ENCODE measurements at regions of chr6 and their contacts with region 1.

Region 1: GRCh38 chr6:138752017-138752416 is 21.6 kb upstream of the CCDC28A start:
- DNase-seq: no peak
- H3K4me3 ChIP-seq: no peak overlapping the region
- H3K27ac ChIP-seq: no peak overlapping the region
- H3K4me1 ChIP-seq: no peaks in the 10 kb centered on the region
- H3K27me3 ChIP-seq: no peaks in the 10 kb centered on the region
- CTCF ChIP-seq: no peak

Region 2: DNA sequence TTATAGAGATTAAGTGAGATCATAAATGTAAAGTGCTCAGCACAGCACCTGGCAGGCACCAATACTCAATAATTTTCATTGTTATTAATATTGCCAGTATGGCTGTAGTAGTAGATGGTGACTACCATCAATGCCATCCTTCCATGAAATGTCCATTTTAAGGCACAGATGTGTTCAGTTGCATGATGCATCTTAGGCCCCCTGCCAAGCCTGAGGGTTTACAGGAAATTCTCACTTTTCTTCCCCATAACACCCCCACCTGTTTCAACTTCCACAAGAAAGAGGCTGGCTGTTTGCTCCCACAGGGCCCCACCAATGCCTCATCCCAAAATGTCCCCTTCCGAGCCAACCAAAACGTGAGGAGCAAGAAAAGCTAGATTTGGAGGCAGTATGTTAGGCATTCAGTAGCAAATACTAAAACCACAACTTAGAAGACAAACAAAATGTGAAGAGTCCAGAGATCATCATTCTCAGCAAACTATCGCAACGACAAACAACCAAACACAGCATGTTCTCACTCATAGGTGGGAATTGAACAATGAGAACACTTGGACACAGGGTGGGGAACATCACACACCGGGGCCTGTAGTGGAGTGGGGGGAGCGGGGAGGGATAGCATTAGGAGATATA is 142.1 kb before region 1 on chr6:
- intact Hi-C with region 1: loop called (anchors 10 kb)
- DNase-seq: no peak
- H3K4me3 ChIP-seq: no peak overlapping the region
- H3K27ac ChIP-seq: no peak overlapping the region
- H3K4me1 ChIP-seq: no peaks in the 10 kb centered on the region
- H3K27me3 ChIP-seq: no peaks in the 10 kb centered on the region
- CTCF ChIP-seq: no peak

Measured in tibial artery (tissue), 4 donors.